Vagina (tissue), 2 donors: ENCODE measurements at regions of chr11 and their contacts with region 1.

Region 1: DNA sequence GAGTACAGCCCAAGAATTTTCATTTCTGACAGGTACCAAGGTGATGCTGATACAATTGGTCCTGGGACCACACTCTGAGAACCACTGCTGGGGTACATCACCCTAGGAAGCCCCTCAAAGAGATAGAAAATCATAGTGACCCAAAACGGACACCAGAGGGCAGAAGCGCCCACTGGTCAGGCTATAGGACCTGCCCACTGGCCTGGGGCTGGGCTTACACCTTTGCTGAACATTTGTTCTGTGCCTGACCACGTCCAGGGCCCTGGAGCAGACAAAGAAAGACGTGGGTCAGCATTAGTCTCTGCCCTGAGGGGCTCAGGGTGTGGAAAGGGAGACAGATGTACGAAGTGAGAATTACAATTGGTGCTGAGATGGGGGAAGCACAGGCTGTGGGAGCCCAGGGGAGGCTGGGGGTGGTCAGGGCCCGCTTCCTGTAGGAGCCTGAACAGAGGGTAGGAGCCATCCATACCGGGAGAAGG is 14.4 kb upstream of the SERPINH1 start:
- DNase-seq: no peak
- H3K4me3 ChIP-seq: no peak overlapping the region
- H3K27ac ChIP-seq: no peak overlapping the region
- H3K4me1 ChIP-seq: no peaks in the 10 kb centered on the region
- H3K27me3 ChIP-seq: no peaks in the 10 kb centered on the region
- CTCF ChIP-seq: peak; percentile 82 to 96 (median 90)
- POLR2A ChIP-seq: no peak

Region 2: GRCh38 chr11:75582895-75583717 is 35.5 kb after region 1 on chr11:
- intact Hi-C with region 1: loop called (anchors 5 kb)
- DNase-seq: no peak
- H3K4me3 ChIP-seq: peak overlapping the region; percentile 75
- H3K27ac ChIP-seq: peak overlapping the region; percentile 99
- H3K4me1 ChIP-seq: peaks cover 30% of the 10 kb centered on the region
- H3K27me3 ChIP-seq: no peaks in the 10 kb centered on the region
- CTCF ChIP-seq: peak in 2 of 3 experiments; percentile 22 to 23
- POLR2A ChIP-seq: peak in 1 of 2 donors; percentile 54